ENCODE measurements at regions of chr2 and their contacts with region 1.

Region 1: DNA sequence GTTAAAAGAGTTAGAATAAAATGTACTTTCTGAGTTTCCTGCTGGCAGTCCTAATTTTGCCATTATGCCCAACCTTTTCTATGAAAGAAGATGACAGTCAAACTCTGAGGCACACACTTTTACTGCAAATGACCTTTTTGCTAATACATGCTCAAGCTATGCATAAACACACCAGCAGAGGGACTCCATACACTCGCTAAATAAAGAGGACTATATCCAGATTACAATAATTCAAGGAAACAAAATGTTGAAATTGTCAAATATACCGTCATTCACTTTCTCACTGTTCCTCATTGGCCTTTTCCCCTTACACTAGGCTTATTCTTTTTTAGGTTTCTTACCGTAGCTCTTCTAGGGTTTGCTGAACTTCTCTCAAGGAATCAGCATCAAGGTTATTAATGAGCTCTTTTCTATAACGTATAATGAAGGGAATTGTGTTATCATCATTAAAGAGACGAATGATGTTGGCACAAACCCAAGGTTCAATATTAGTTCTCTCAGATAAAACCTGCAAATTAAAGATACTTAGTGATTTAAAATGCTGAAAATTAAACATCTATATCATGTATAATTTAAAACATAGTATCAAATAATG is 25.7 kb downstream of the SRBD1 start:
- DNase-seq: no peak
- H3K4me3 ChIP-seq: peak overlapping the region in 1 of 2 donors; percentile 10
- H3K27ac ChIP-seq: no peak overlapping the region
- H3K4me1 ChIP-seq: peaks cover 0 to 3% of the 10 kb centered on the region in 2 donors
- H3K27me3 ChIP-seq: no peaks in the 10 kb centered on the region
- CTCF ChIP-seq: peak; percentile 38 to 70 (median 59)

Region 2: GRCh38 chr2:45611020-45611737 is 25.8 kb after region 1 on chr2 and contains the start of gene SRBD1:
- intact Hi-C with region 1: loop called (anchors 1 kb)
- DNase-seq: peak; percentile 80 to 96
- H3K4me3 ChIP-seq: peak within 1 kb of the TSS; percentile 71 to 73
- H3K27ac ChIP-seq: peak within 1 kb of the TSS; percentile 74 to 88
- H3K4me1 ChIP-seq: peaks cover 0 to 3% of the 10 kb centered on the region in 2 donors
- H3K27me3 ChIP-seq: no peaks in the 10 kb centered on the region
- CTCF ChIP-seq: no peak
- total RNA-seq, gene SRBD1: 7.6 TPM

Region 3: DNA sequence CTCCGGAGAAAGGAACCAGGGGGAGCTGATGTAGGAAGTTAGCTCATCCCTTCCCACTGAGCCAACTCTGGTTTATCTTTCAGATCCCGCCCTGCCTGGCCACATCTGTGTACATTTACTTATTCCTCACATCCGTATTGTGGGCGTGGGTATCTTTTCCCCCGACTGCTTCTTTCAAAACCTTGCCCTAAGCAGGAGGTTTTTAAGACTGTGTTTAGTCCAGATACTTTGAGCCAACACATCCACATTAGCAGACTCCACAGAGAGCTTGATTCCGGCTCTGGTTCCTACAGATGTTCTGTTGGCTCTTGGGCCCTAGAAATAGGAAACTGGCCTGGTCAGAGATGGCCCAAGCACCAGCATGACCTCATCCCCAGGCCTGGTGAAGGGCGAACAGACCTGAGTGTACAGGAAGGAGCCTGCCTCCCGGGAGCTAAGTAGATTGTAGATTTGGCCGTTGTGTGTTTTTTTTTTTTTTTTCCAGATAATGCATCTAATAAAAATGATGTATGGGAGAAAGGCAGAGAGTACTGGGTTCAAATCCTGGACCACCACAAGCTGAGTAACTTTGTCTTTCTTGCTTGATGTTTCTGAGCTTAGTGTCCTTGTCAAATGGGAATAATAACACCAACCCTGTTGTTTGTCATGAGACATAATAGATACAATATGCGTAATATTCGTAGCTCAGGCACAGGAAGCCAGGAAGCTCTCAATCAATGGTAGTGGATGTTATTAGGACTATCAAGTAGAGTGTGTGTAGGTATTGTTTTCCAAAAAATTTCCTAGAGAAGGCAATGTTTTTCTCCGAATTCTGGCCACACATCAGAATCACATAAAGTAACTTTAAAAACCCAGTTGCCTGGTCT is 158.4 kb after region 1 on chr2:
- intact Hi-C with region 1: no loop called
- DNase-seq: peak in 1 of 2 donors; percentile 70
- H3K4me3 ChIP-seq: no peak overlapping the region
- H3K27ac ChIP-seq: peak overlapping the region in 1 of 2 donors; percentile 40
- H3K4me1 ChIP-seq: no peaks in the 10 kb centered on the region
- H3K27me3 ChIP-seq: no peaks in the 10 kb centered on the region
- CTCF ChIP-seq: no peak

Measured in ascending aorta (tissue), 2 donors.